ENCODE measurements at regions of chr22 and their contacts with region 1.

Region 1: GRCh38 chr22:21972293-21972779 is 10.3 kb downstream of the TOP3B start:
- DNase-seq: peak; percentile 90
- CTCF ChIP-seq: peak; percentile 90

Region 2: GRCh38 chr22:21947040-21948014 is 25.0 kb before region 1 on chr22:
- CTCF ChIA-PET with region 1: interaction called, 50 read pairs
- POLR2A ChIA-PET with region 1: interaction called, 3 read pairs
- DNase-seq: no peak
- CTCF ChIP-seq: no peak

Region 3: GRCh38 chr22:21952586-21953571 is 19.5 kb before region 1 on chr22 and contains the start of gene PPM1F:
- CTCF ChIA-PET with region 1: interaction called, 50 read pairs
- POLR2A ChIA-PET with region 1: interaction called, 3 read pairs
- DNase-seq: peak; percentile 98
- CTCF ChIP-seq: peak; percentile 91

Region 4: GRCh38 chr22:21961886-21962654 is 10.3 kb before region 1 on chr22:
- CTCF ChIA-PET with region 1: interaction called, 12 read pairs
- POLR2A ChIA-PET with region 1: no interaction called
- DNase-seq: no peak
- CTCF ChIP-seq: no peak

Region 5: DNA sequence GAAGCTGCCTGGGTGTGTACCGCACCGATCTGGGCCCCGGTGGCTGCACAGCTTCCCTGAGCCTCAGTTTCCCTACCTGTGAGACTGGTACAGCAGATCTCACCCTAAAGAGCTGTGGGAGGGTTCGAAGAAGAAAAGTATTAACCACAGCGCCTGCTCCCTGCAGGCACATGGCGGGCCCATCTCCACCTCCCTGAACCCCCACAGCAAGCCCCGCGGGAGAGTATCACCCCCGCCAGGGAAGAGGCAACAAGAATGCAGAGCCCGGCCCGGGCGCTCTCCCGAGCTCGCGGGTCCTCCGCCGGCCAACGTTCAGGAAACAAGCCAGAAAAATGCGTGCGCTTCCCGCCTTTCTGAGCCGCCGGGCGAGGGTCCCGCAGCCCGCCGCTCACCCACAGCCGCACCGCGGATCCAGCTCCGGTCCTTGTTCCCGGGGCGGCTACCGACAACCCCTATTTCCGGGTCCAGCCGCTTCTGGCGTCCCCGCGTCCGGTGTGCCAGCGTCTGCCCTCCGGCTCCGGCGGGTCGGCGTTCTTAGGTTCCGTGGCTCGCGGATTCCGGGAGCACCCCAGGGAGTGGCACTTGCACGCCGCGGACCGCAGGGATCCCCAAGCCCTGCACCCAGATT is 10.1 kb after region 1 on chr22 and contains the start of gene TOP3B:
- CTCF ChIA-PET with region 1: interaction called, 47 read pairs
- POLR2A ChIA-PET with region 1: no interaction called
- DNase-seq: peak; percentile 93
- CTCF ChIP-seq: no peak

Region 6: DNA sequence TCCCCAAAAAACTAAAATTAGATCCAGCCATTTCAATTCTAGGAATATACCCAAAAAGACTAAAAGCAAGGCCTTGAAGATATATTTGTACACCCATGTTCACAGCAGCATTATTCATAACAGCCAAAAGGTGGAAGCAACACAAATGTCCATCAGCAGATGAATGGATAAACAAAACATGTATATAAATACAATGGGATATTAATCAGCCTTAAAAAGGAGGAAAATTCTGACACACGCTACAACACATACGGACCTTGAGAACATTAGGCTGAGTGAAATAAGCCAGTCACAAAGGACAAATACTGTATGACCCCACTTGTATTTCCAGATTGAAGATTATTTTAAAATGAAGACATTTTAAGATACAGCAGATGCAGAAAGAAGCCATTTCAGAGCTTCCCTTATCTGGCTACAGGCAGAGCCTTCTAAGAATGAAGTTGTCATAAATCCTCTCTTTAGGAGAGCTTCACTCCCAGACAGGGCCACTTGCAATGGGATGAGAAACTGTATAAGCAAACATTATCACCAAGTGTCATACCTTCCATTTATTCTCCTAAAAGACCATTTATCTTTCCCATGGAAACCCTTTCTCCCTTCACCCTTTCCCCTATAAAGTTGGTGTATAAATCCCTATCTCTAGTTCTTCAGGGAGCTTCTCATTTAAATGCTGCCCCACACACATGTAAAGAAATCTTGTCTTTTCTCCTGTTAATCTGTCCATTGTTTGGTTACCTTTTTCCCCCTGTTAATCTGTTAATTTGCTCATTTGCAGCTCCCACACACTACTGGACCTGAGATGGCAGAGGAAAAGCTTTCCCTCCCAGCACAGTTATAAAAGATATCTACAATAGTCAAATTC is 29.6 kb after region 1 on chr22:
- CTCF ChIA-PET with region 1: interaction called, 15 read pairs
- POLR2A ChIA-PET with region 1: no interaction called
- DNase-seq: no peak
- CTCF ChIP-seq: no peak

Region 7: DNA sequence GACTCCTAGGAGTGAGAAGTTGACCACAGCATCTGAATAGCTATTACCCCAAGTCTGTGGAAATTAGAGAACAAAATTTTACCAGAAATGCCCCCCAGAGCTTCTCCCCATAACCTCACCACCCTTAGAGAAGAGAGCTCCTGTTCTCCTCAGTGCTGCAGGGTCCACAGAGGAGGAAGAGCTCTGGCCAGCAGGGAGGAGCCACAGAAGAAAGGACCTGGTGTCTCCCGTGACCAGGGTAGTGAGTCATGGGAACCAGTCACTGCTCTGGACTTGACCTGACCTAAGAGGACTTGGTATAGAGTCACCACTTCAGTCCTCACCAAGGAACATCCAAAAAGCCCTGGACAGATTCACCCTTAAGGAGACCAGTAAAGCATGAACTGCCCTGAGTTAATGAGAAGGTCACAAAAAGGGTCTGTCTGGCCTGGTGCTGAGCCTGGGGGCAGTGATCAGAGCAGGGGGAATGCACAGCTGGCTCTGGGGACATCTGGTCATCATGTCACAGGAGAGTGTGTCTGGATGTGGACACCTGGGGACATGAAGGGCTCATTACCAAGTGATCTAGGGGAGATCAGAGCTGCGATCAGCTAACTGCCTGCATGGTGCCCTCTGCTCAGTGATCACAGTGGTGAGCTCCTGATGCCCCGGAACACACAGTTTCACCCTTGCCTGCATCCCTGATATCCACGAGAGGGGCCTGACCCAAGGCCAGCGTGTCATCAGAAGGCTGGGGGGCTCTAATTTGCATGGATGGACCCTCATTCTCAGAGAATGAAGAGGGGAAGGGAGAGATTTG is 113.6 kb after region 1 on chr22:
- CTCF ChIA-PET with region 1: no interaction called
- POLR2A ChIA-PET with region 1: no interaction called
- DNase-seq: no peak
- CTCF ChIP-seq: no peak

Region 8: DNA sequence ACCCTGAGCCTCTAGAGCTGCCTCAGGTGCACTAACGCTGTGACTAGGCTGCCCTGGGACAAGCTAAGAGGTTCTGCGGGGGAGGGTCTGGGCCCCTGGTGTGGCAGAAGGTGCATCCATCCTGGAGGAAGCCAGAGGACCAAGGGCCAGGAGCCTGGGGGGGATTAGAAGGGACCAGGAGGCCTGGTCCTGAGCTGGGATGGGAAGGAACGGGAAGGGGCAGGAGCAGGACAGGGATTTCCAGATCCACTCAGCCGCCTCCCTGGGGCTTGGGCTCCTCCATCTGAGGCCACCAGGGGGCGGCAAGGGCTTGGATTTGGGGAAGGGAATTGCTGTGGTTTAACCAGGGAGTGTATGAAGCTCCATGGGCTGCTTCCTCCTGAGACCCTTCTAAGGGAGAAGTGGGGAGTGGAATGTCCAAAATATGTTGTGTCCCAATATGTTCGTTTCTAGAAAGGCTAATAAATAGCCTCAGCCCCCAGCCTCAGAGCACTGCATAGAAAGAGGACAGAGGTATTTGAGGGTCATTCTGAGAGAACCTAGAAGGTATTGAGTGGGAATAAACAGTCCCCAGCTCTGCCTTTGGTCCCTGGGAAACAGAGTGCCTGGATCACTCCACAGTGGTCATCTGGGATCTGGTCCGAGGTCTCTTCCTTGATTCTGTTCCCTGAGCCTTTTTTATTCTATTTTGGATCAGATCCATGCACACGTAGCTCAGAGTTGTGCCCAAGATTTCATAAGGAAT is 604.1 kb after region 1 on chr22:
- CTCF ChIA-PET with region 1: no interaction called
- POLR2A ChIA-PET with region 1: no interaction called
- DNase-seq: peak; percentile 61
- CTCF ChIP-seq: peak; percentile 84

Measured in GM10248 (cell line).